ENCODE measurements at regions of chrX and their contacts with region 1.

Region 1: GRCh38 chrX:13087322-13088155 is 43.1 kb upstream of the FAM9C start:
- DNase-seq: peak; percentile 70
- CTCF ChIP-seq: no peak

Region 2: DNA sequence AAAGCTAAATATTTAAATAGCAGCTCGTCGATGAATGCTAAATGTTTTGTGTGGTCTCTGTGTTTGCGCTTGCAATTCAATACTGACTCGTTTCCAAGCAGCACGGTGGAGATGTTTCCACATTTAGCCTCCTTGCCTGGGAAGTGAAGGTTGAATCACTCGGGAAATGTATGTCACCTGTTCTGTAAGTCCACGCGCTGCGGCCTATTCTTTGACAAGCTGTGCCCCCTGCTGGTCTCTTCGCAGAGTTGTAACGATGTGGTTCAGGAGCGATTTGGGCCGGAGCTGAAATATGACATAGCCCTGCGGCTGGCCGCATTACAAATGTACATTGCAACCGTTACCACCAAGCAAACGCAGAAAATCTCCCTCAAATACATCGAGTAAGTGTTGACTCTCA is 385.9 kb before region 1 on chrX:
- in situ Hi-C with region 1: no loop called
- DNase-seq: peak; percentile 36
- CTCF ChIP-seq: peak; percentile 63

Region 3: GRCh38 chrX:12949927-12950656 is 137.4 kb before region 1 on chrX:
- in situ Hi-C with region 1: loop called (anchors 10 kb)
- DNase-seq: peak; percentile 60
- CTCF ChIP-seq: no peak

Region 4: DNA sequence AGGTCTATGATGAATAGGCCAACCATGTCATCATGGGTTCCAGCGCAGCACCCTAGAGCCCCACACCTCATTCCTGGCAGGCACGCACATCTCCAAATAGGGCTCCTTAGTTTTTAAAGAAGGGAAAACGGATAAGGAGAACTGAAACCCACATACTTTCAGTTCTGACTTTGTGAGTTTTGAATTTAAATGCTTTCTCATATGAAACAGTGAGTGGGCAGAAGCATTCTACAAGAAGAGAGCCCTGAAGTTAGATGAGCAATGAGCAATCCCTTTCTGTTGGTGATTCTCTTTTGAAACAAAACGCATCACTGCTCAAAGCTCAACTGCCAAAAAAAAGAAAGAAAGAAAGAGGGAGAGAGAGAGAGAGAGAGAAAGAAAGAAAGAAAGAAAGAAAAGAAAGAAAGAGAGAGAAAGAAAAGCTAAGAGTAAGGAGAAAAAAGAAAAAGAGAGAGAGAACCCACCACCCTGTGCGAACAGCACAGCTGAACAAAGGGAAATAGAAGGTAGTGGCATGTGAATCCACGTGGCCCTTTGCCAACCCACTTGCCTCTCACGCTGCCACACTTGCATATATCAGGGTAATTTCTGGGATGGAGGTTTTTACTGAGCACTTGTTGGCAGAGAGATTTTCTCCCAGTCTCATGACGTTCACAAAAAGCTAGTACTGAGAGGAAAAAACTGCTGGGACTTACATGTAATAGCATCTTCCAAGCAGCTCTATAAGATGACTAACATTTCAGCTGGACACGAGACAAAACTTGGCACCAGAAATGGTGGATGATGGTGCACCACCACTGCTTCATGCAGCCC is 81.7 kb before region 1 on chrX:
- in situ Hi-C with region 1: loop called (anchors 10 kb)
- DNase-seq: peak; percentile 56
- CTCF ChIP-seq: no peak

Region 5: DNA sequence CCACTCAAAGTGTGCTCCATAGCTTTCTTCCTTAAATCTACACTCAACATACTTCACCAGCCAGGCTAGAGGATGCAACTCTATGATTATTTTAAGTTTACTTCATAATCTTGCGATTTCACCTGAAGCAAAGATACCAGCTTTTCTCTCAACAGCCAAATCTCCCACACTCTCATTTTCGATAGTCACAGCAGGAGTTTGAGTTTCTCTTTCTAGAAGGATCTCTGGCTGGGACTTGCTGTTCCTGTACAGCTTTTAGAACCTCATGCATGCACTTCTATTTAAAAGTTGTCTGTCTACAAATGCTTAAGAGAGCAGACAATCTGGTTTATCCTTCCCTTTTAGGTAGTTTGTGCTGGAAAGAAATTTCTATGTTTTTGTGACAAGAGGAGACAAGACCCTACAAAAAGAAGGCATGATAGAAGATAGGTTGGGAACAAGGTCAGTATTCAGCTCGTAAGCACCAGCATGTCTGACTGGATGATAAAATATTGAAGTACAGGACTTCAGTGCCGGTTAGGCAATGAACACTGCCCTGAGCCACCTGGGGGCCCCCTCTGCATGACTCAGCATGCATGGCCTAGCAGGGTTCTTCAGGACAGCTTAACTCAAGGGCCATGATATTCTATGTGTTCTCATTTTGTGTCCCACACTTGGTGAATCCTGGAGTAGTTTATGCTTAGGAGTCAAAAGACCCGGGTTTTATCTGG is 166.7 kb after region 1 on chrX:
- in situ Hi-C with region 1: loop called (anchors 10 kb)
- DNase-seq: peak; percentile 21
- CTCF ChIP-seq: peak; percentile 62

Region 6: GRCh38 chrX:13487731-13488523 is 400.4 kb after region 1 on chrX:
- in situ Hi-C with region 1: loop called (anchors 10 kb)
- DNase-seq: peak; percentile 60
- CTCF ChIP-seq: peak; percentile 65